Activated CD8-positive, alpha-beta T cell treated with anti-CD3 and anti-CD28 coated beads for 36 hours (primary cell): ENCODE measurements at regions of chr12 and their contacts with region 1.

Region 1: DNA sequence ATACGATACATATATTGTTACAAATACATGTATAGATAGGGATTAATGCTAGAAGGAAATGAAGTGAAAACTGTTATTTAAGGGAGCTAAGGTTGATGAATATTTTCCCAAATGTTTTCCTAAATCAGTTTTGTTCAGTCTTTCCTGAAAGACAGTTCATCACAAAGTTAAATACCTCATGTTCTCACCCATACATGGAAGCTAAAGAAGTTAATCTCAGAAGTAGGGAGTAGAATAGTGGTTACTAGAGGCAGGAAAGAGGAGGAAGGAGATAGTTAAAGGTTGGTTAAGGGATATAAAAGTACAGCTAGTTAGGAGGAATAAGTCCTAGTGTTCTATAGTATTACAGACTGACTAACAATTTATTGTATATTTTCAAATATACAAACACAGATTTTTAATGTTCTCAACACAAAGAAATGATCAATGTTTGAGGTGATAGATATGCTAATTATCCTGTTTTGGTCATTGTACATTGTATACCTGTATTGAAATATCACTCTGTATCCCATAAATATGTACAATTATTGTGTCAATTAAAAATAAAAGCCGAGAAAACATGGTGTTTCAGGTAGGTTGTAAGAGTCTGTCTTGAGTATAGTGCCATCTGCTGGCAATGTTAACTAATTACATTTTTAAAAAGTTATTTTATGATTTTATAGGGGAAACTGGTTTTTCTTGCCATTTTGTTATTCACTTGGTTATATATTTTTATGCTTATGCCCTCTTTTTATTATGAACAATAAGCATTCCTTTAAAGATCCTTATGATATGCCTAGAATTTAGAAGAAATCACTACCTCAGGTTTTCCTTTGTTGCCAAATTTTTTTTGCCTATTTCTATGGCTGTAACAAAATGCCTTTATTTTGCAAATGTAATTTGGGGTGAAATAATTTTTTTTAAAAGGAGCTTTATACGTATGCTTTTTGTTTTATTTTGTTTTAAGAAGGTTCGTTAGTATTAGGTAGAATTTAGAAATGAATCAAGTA is 26.9 kb downstream of the ZDHHC17 start:
- DNase-seq: no peak
- ATAC-seq: no peak
- H3K4me3 Mint-ChIP-seq: no peak overlapping the region
- H3K27ac Mint-ChIP-seq: no peak overlapping the region
- H3K4me1 Mint-ChIP-seq: peaks cover 17% of the 10 kb centered on the region
- H3K27me3 Mint-ChIP-seq: no peaks in the 10 kb centered on the region
- CTCF ChIP-seq: peak; percentile 76

Region 2: GRCh38 chr12:76621582-76622024 is 169.3 kb before region 1 on chr12:
- CTCF ChIA-PET with region 1: interaction called, 83 read pairs
- POLR2A ChIA-PET with region 1: no interaction called
- intact Hi-C with region 1: loop called (anchors 1 kb)
- DNase-seq: peak; percentile 83
- ATAC-seq: peak; percentile 95
- H3K4me3 Mint-ChIP-seq: no peak overlapping the region
- H3K27ac Mint-ChIP-seq: no peak overlapping the region
- H3K4me1 Mint-ChIP-seq: peaks cover 3% of the 10 kb centered on the region
- H3K27me3 Mint-ChIP-seq: peaks cover 2% of the 10 kb centered on the region
- CTCF ChIP-seq: peak; percentile 95

Region 3: DNA sequence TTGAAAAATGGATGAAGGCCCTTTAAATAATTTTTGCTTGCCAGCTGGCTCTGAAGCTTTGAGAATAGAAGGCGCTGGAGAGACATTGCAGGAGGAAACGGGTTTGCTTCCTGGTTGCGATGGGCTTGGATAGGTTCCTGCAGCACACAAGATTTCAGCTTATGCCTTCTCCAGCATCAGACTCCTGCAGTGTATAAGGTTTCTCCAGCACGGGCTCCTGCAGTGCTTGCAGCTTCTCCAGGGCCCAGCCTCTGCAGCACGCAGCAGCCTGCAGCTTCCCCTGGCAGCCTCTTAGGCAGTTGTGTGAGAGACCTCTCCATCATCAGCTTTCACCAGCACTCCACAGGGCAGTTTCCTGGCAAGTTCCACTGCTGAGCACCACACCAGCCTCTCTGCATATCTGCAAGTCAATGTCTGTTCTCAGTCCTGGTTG is 105.6 kb before region 1 on chr12:
- CTCF ChIA-PET with region 1: interaction called, 15 read pairs
- POLR2A ChIA-PET with region 1: no interaction called
- intact Hi-C with region 1: loop called (anchors 5 kb)
- DNase-seq: no peak
- ATAC-seq: no peak
- H3K4me3 Mint-ChIP-seq: no peak overlapping the region
- H3K27ac Mint-ChIP-seq: no peak overlapping the region
- H3K4me1 Mint-ChIP-seq: peaks cover 3% of the 10 kb centered on the region
- H3K27me3 Mint-ChIP-seq: no peaks in the 10 kb centered on the region
- CTCF ChIP-seq: no peak

Region 4: GRCh38 chr12:76764851-76765250 is 26.0 kb before region 1 on chr12:
- CTCF ChIA-PET with region 1: interaction called, 12 read pairs
- POLR2A ChIA-PET with region 1: no interaction called
- intact Hi-C with region 1: no loop called
- DNase-seq: no peak
- ATAC-seq: no peak
- H3K4me3 Mint-ChIP-seq: peak overlapping the region; percentile 90
- H3K27ac Mint-ChIP-seq: peak overlapping the region; percentile 95
- H3K4me1 Mint-ChIP-seq: peaks cover 41% of the 10 kb centered on the region
- H3K27me3 Mint-ChIP-seq: no peaks in the 10 kb centered on the region
- CTCF ChIP-seq: no peak

Region 5: DNA sequence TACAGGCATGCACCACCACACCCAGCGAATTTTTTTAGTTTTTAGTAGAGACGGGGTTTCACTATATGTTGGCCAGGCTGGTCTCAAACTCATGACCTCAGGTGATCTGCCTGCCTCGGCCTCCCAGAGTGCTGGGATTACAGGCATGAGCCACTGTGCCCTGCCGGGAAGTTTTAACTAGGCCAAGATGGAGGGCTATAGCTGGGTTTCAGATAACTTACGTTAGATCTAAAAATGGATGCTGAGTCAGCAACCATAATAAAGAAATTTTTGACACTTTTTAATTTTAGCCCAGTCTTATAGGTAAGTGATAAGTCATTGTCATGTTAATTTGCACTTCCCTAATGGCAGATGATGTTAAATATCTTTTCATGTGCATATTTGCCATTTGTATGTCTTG is 12.5 kb before region 1 on chr12:
- CTCF ChIA-PET with region 1: interaction called, 12 read pairs
- POLR2A ChIA-PET with region 1: no interaction called
- intact Hi-C with region 1: no loop called
- DNase-seq: no peak
- ATAC-seq: no peak
- H3K4me3 Mint-ChIP-seq: no peak overlapping the region
- H3K27ac Mint-ChIP-seq: no peak overlapping the region
- H3K4me1 Mint-ChIP-seq: peaks cover 69% of the 10 kb centered on the region
- H3K27me3 Mint-ChIP-seq: no peaks in the 10 kb centered on the region
- CTCF ChIP-seq: no peak